GM23248 (cell line): ENCODE measurements at regions of chr1 and their contacts with region 1.

Region 1: DNA sequence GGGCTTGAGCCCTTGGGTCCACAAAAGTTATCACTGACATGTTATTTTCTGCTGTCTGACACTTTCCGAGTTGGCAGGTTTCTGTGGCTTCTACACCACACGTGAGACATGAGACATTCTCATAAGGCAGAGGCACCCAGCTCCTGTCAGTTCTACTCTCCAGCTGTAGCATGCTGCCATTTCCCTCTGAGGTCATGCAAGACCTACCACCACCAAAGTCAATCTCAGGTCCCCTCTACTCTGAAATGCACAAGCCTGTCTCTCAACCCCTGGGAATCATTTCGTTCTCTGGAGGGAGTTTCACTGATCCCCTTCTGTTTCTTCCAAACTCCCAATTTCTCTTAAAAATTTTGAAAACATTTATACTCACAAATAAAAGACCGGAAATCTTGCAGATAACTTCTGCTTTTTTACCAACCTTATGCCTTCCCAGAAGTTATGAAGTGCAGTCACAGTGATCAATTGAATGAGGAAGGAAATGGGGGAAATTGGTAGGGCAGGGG is 39.5 kb upstream of the CR2 start:
- DNase-seq: no peak
- H3K4me3 ChIP-seq: no peak overlapping the region
- H3K27ac ChIP-seq: no peak overlapping the region
- H3K4me1 ChIP-seq: no peaks in the 10 kb centered on the region
- H3K27me3 ChIP-seq: peaks cover 8% of the 10 kb centered on the region

Region 2: DNA sequence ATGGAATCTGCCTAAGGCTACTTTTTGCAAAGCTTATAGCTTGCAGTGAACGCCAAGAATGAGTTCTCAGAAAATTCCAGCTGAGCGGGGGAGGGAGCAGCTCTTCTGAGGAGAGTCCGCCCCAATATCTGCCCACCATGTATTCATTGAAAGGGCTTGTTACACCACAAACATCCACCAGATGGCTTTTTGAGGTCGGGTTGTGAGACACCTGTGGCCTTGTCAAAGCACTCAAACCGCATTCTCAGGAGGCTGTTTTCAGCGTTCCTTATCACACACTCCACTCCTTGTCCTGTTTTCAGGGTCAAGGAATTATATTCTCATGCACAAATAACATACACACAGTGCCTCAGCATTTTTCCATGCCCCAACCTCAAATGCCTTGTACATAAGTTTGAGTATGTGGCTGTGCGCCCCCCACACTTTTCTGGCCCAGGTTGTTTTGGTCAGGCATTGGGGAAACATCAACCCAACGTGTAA is 329.9 kb before region 1 on chr1:
- in situ Hi-C with region 1: loop called (anchors 5 kb)
- DNase-seq: peak; percentile 63
- H3K4me3 ChIP-seq: no peak overlapping the region
- H3K27ac ChIP-seq: no peak overlapping the region
- H3K4me1 ChIP-seq: 0 out of 2 replicates have a peak, but pooled peaks cover 3% of the 10 kb centered on the region
- H3K27me3 ChIP-seq: peaks cover 21% of the 10 kb centered on the region